ENCODE measurements at regions of chrX and their contacts with region 1.

Region 1: DNA sequence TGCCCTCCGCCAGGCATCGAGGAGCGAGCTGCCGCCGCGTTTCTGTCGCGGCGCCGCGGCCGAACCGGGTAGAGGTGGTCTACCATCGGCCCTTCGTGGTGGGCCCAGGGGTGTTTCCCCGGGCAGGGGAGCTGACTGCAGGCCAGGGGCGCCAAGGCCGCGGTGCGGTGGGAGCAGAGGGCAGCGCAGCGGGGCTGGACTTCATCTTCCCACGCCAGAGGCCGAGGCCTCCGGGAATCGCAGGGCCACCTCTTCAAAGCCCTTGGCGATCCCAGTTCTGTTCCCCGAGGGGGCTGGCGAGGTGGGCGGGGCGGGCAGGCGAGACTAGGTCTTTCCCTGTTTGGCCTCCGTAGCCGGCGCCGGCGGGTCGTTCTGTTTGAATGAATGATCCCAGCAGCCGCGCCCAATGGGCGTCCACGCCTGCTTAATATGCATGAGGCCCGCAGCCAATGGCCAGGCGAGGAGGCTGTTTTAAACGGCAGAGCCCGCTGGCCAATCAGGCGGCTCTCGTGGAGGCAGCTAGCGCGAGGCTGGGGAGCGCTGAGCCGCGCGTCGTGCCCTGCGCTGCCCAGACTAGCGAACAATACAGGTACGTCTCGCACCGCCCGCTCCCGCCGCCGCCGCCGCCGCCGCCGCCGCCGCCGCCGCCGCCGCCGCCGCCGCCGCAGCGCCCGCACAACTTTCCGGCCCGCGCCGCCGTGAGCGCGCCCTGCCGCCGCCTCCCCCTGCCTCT is at the start of gene HMGB3:
- DNase-seq: peak; percentile 92
- total RNA-seq, gene HMGB3: 8.9 TPM

Region 2: DNA sequence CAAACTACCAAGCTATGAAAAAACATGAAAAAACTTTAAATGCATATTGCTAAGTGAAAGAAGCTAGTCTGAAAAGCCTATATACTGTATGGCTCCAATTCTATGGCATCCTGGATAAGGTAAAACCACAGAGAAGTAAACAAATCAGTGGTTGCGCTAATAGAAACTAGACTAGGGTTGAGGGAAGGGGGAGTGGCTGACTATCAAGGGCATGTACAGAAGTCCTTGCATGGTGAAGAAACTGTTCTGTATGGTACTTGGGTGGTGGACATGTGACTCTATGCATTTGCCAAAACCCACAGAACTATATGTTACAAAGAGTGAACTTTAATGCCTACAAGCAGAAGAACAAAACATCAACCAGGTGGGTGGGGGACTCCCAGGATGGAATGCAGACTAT is 192.9 kb before region 1 on chrX:
- intact Hi-C with region 1: no loop called
- DNase-seq: no peak

Region 3: GRCh38 chrX:150805736-150806135 is 177.2 kb before region 1 on chrX:
- intact Hi-C with region 1: no loop called
- DNase-seq: no peak

Region 4: GRCh38 chrX:150898343-150899190 is 84.4 kb before region 1 on chrX and contains the start of gene CD99L2:
- intact Hi-C with region 1: loop called (anchors 10 kb)
- DNase-seq: peak; percentile 95
- total RNA-seq, gene CD99L2: 90.8 TPM